ENCODE measurements at regions of chr22 and their contacts with region 1.

Region 1: GRCh38 chr22:24938741-24939341 is 7.7 kb downstream of the LHFPL7 start:
- DNase-seq: no peak
- ATAC-seq: peak in 3 of 4 donors; percentile 35 to 56 (median 45)
- H3K4me3 ChIP-seq: no peak overlapping the region
- H3K27ac ChIP-seq: no peak overlapping the region
- H3K4me1 ChIP-seq: no peaks in the 10 kb centered on the region
- H3K27me3 ChIP-seq: no peaks in the 10 kb centered on the region
- CTCF ChIP-seq: peak; percentile 60 to 85 (median 73)
- POLR2A ChIP-seq: no peak

Region 2: GRCh38 chr22:24859587-24859986 is 79.3 kb before region 1 on chr22:
- intact Hi-C with region 1: no loop called
- DNase-seq: no peak
- ATAC-seq: no peak
- H3K4me3 ChIP-seq: no peak overlapping the region
- H3K27ac ChIP-seq: no peak overlapping the region
- H3K4me1 ChIP-seq: no peaks in the 10 kb centered on the region
- H3K27me3 ChIP-seq: no peaks in the 10 kb centered on the region
- CTCF ChIP-seq: no peak
- POLR2A ChIP-seq: no peak

Region 3: DNA sequence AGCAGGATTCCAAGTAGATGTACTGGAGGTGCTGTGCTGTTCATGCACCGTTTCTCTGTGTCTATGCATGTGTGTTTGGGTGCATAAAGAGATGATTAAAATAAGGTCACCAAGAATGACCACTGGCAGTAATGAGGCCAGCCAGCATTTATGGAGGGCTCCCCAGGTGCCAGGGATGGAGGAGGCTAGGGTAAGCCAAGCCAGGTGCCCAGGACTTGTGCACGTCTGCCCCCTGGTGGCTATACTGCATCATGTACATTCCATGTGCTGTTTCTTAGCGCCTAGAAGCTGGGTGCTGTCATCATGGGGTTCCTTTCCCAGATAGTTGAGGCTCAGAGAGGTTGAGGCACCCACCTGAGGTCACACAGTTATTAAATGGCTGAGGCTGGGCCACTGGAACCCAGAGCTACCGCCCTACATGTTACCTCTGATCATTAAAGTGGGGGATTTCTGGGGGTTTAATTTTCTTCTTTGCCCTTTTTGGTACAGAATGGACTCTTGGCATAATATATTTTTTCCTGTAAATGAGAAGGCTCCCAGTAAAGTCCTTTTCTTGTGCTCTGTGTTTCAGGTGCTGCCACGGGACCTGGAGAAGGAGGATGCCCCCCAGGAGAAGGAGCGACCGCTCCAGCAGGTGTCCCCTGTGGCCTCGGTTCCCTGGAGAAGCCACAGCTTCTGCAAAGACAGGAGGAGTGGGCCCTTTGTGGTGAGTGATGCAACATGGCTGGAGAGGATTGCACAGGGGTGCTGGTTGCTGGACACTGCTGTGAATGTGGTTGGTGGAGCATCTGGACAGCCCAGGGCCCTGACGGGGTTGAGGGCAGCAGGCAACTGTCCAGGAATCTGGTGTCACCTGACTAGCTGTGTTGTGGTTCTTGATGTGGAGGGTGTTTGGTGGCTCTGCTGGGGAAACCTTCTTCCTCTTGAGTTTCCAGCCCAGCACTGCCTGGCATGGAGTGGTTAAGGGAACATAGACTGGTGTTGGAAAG is 110.1 kb after region 1 on chr22:
- intact Hi-C with region 1: loop called in 2 of 10 experiments (anchors 2 kb)
- DNase-seq: peak in 4 of 5 donors; percentile 57 to 77 (median 66)
- ATAC-seq: peak; percentile 46 to 84 (median 79)
- H3K4me3 ChIP-seq: no peak overlapping the region
- H3K27ac ChIP-seq: no peak overlapping the region
- H3K4me1 ChIP-seq: peaks cover 0 to 33% (median 3%) of the 10 kb centered on the region in 12 donors
- H3K27me3 ChIP-seq: no peaks in the 10 kb centered on the region
- CTCF ChIP-seq: peak; percentile 75 to 96 (median 90)
- POLR2A ChIP-seq: no peak

Region 4: DNA sequence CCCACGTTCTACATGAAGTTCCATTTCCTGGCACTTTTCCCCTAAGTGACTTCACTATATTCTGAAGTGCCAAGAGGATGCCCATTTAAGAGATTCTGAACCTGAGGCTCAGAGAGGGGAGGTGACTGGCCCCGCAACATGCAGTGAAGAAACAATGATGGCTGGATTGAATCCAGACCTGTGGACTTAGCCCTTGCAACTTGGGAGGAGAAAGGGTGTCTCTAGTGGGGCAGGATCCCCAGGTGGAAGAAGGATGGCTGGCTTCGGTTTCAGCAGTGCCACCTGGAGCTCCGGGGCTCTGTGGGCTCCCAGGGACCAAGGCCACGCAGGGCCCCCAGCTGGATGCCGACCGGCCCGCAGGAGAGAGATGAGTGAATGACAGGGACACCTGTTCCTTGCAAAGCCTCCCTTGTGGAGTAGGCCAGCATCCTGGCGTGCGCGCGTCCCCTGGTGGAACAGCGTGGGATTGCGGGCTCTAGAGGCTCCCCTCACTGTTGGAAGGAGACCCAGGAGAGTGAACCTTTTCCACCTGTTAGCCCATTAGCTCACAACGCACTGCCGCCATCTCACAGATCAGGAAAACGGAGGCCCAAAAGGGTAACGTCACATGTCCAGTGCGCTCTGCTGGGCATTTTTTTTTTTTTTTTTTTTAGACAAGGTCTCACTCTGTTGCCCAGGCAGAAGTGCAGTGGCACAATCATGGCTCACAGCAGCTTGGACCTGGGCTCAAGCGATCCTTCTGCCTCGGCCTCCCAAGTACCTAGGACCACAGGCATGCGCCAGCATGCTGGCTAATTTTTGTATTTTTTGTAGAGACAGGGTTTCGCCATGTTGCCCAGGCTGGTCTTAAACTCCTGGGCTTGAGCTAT is 118.4 kb after region 1 on chr22:
- intact Hi-C with region 1: loop called in 2 of 10 experiments (anchors 2 to 5 kb)
- DNase-seq: peak in 4 of 5 donors; percentile 46 to 86 (median 58)
- ATAC-seq: peak; percentile 19 to 79 (median 76)
- H3K4me3 ChIP-seq: no peak overlapping the region
- H3K27ac ChIP-seq: no peak overlapping the region
- H3K4me1 ChIP-seq: peaks cover 0 to 18% (median 1%) of the 10 kb centered on the region in 12 donors
- H3K27me3 ChIP-seq: no peaks in the 10 kb centered on the region
- CTCF ChIP-seq: peak; percentile 74 to 95 (median 84)
- POLR2A ChIP-seq: no peak

Region 5: DNA sequence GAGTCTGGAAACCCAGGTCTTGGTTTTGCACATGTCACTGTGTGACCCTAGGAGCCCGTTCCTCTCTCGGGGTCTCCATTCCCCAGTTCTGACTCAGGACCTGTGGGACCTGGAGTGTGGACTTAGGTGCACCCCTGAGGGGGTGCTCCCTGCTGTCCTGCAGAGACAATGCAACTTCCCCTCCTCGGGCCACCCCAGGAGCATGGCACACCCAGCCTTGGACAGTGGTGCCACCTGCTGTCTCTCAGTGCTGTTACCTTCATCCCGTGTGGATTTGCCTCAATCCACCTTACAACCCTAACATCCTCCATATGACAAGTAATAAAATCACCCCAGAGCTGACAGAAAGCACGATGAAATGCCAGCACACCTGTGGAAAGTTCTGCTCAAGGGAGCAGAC is 233.3 kb after region 1 on chr22:
- intact Hi-C with region 1: loop called in 1 of 10 experiments (anchors 10 kb)
- DNase-seq: peak in 1 of 5 donors; percentile 55
- ATAC-seq: peak; percentile 71 to 77 (median 74)
- H3K4me3 ChIP-seq: no peak overlapping the region
- H3K27ac ChIP-seq: no peak overlapping the region
- H3K4me1 ChIP-seq: no peaks in the 10 kb centered on the region
- H3K27me3 ChIP-seq: no peaks in the 10 kb centered on the region
- CTCF ChIP-seq: peak; percentile 21 to 65 (median 52)
- POLR2A ChIP-seq: no peak

Region 6: GRCh38 chr22:25182131-25183110 is 243.6 kb after region 1 on chr22:
- intact Hi-C with region 1: loop called in 2 of 10 experiments (anchors 10 kb)
- DNase-seq: no peak
- ATAC-seq: no peak
- H3K4me3 ChIP-seq: no peak overlapping the region
- H3K27ac ChIP-seq: no peak overlapping the region
- H3K4me1 ChIP-seq: no peaks in the 10 kb centered on the region
- H3K27me3 ChIP-seq: no peaks in the 10 kb centered on the region
- CTCF ChIP-seq: no peak
- POLR2A ChIP-seq: no peak

Measured in heart left ventricle (tissue), 16 donors.